ENCODE measurements at regions of chr1 and their contacts with region 1.

Region 1: DNA sequence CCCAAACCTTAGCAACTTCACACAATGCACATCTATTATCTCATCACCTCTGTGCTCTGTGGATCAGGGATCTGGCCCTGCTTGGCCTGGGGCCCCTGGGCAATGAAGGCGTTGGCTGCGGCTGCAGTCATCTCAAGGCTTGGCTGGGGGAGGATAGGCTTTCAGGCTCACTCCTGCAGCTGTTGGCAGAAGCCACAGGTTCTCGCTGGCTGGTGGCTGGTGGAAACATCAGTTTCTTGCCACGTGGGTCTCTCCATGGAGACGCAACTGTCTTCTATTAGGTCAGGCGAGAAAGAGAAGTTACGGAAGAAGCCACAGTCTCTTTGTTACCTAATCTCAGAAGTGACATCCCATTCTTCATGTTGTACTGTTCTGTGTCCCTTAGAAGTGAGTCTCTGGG is 3.6 kb upstream of the NPPA start:
- DNase-seq: peak in 1 of 4 experiments; percentile 35
- ATAC-seq: peak; percentile 61
- H3K4me3 ChIP-seq: no peak overlapping the region
- H3K27ac ChIP-seq: no peak overlapping the region
- H3K4me1 ChIP-seq: peaks cover 6 to 11% of the 10 kb centered on the region in 2 experiments; a peak in 4 of 5 replicates
- H3K27me3 ChIP-seq: peaks cover 6 to 22% of the 10 kb centered on the region in 2 experiments; a peak in 3 of 5 replicates
- CTCF ChIP-seq: no peak
- EP300 ChIP-seq: no peak
- POLR2A ChIP-seq: no peak
- RAD21 ChIP-seq: no peak

Region 2: DNA sequence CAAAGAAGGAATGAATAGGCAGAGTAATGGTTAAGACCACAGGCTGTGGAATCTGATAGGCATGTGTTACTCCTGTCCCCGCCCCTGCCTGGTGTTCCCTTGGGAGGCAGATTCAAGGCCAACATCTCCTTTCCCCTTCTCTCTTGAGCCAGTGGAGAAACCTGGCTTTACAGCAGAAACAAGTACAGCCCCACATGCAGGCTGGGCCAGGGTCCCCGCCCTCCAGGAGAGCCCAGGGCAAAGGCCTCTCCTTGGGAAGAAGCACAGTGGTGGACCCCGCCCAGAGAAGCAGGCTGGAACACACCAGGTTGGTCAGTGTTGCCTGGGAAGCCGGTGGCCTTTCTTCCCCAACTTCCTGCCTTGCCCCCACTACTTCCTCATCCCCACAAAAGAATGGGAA is 82.4 kb before region 1 on chr1:
- CTCF ChIA-PET with region 1: no interaction called
- POLR2A ChIA-PET with region 1: no interaction called
- in situ Hi-C with region 1: no loop called
- intact Hi-C with region 1: no loop called
- DNase-seq: no peak
- ATAC-seq: peak; percentile 21; the same call in 2 of the 3 replicates
- H3K4me3 ChIP-seq: no peak overlapping the region
- H3K27ac ChIP-seq: no peak overlapping the region
- H3K4me1 ChIP-seq: peaks cover 5 to 33% of the 10 kb centered on the region in 2 experiments; a peak in 4 of 5 replicates
- H3K27me3 ChIP-seq: no peaks in the 10 kb centered on the region
- CTCF ChIP-seq: no peak
- EP300 ChIP-seq: no peak
- POLR2A ChIP-seq: no peak
- RAD21 ChIP-seq: no peak

Region 3: DNA sequence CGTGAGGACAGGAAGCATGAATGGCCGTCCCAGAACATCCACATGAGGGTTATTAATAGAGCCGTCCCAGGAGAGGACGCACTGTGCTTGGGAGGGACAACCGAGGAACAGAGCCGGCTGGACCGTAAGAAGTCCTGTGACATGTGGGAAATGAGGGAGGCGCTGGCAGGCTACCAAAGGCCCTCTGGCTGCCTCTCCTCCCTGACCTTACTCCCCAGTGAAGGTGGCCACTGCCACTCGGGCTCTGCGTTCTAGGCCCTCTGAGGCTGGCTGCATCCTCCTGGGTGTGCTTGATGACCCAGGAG is 23.0 kb after region 1 on chr1:
- CTCF ChIA-PET with region 1: no interaction called
- POLR2A ChIA-PET with region 1: interaction called, 12 read pairs
- in situ Hi-C with region 1: no loop called
- intact Hi-C with region 1: no loop called
- DNase-seq: no peak
- ATAC-seq: no peak
- H3K4me3 ChIP-seq: no peak overlapping the region
- H3K27ac ChIP-seq: no peak overlapping the region
- H3K4me1 ChIP-seq: peaks cover 8 to 41% of the 10 kb centered on the region in 2 experiments
- H3K27me3 ChIP-seq: peaks cover 0 to 5% of the 10 kb centered on the region in 2 experiments; a peak in 2 of 5 replicates
- CTCF ChIP-seq: no peak
- EP300 ChIP-seq: no peak
- POLR2A ChIP-seq: no peak
- RAD21 ChIP-seq: no peak

Measured in K562 (cell line).